A673 (cell line): ENCODE measurements at regions of chr10 and their contacts with region 1.

Region 1: GRCh38 chr10:6580279-6581029 is 378 bp upstream of the PRKCQ start:
- DNase-seq: peak; percentile 49
- H3K4me3 ChIP-seq: peak overlapping the region; percentile 47
- H3K27ac ChIP-seq: no peak overlapping the region
- H3K4me1 ChIP-seq: peaks cover 5% of the 10 kb centered on the region
- H3K27me3 ChIP-seq: peaks cover 97% of the 10 kb centered on the region
- CTCF ChIP-seq: peak; percentile 34; the same call in 1 of the 2 replicates

Region 2: DNA sequence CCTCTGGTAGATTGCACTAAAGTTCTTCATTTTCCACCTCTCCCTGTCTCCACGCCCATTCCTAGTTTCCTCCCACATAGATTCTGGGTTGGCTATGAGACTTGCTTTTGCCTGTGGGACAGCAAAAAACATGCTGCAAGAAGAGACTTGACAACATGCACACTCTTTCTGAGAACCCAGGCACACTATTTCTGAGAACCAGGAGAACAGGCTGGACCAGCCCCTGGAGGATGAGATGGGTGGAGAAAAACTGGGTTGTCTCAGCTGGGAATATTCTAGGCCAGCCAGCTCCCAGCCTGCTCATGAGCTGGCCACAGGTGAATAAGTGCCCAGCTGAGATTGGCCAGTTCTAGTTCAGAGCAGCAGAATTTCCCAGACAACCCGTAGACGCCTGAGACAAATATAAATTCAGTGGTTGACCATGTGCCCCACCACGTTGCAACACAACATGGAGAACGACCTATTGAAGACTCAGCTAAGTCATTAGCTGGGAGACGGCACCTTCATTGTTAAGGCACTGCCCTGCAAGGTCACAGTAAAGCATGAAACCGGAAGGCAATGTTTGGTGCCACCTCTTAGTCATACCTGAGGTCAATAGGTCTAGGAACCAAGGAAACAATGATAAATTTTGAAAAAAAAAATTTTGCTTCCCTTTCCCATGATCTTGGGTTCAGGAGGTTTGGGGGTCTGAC is 1847.2 kb before region 1 on chr10:
- CTCF ChIA-PET with region 1: no interaction called
- POLR2A ChIA-PET with region 1: no interaction called
- intact Hi-C with region 1: loop called (anchors 10 kb)
- DNase-seq: no peak
- H3K4me3 ChIP-seq: no peak overlapping the region
- H3K27ac ChIP-seq: no peak overlapping the region
- H3K4me1 ChIP-seq: no peaks in the 10 kb centered on the region
- H3K27me3 ChIP-seq: no peaks in the 10 kb centered on the region
- CTCF ChIP-seq: no peak

Region 3: DNA sequence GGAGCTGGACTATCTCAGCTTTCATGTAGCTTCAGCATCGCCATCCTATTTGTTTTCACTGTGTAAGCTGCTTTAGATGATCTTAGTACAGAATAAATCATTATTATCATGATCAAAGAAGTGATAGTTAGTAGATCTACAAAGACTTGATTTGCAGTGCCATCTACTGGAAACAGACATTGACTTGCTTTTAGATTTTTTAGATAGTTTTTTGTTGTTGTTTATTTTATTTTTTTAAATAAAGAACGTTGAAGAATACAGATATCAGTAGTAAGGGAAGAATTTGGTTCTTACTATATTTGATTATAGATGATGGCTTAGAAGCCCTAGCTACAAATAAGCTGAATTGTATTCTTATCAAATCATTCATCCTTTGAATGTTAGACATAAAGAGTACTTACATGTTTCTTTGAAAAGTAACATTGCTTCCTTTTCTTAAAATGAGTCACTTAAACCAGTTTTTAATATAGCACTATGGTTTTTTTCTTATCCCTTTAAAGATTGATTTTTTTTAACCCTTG is 836.7 kb after region 1 on chr10:
- CTCF ChIA-PET with region 1: no interaction called
- POLR2A ChIA-PET with region 1: no interaction called
- intact Hi-C with region 1: loop called (anchors 5 kb)
- DNase-seq: peak; percentile 55
- H3K4me3 ChIP-seq: no peak overlapping the region
- H3K27ac ChIP-seq: no peak overlapping the region
- H3K4me1 ChIP-seq: no peaks in the 10 kb centered on the region
- H3K27me3 ChIP-seq: peaks cover 36% of the 10 kb centered on the region
- CTCF ChIP-seq: peak; percentile 68